ENCODE measurements at regions of chr18 and their contacts with region 1.

Region 1: DNA sequence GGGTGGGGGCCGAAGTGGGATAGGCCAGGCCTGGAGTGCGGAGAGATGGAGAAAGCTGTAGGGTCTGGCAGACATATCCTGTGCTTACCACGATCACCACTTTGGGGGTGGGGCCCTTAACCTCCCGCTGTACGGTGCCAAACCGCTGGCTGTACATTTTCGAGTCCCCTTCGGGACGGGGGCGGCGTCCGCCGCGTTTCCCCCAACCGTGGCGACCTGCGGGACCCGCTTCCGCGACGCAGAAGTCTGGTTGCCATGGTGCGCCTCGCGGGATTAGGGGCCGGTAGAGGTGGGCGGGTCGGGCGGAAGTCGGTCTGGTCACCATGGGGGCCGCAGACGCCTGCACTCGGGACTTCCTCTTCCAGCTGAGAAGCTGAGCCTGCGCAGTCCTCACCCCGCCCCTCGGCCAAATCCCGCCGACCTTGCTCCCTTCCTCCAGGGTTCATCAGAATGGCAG is at the start of gene CFAP53:
- DNase-seq: peak; percentile 91
- ATAC-seq: peak; percentile 80
- H3K4me3 Mint-ChIP-seq: peak within 1 kb of the TSS; percentile 89
- H3K27ac Mint-ChIP-seq: peak within 1 kb of the TSS; percentile 88
- H3K4me1 Mint-ChIP-seq: peaks cover 28% of the 10 kb centered on the region
- H3K27me3 Mint-ChIP-seq: no peaks in the 10 kb centered on the region
- CTCF ChIP-seq: no peak
- total RNA-seq, gene CFAP53: 0.27 and 0.29 TPM in 2 replicates

Region 2: DNA sequence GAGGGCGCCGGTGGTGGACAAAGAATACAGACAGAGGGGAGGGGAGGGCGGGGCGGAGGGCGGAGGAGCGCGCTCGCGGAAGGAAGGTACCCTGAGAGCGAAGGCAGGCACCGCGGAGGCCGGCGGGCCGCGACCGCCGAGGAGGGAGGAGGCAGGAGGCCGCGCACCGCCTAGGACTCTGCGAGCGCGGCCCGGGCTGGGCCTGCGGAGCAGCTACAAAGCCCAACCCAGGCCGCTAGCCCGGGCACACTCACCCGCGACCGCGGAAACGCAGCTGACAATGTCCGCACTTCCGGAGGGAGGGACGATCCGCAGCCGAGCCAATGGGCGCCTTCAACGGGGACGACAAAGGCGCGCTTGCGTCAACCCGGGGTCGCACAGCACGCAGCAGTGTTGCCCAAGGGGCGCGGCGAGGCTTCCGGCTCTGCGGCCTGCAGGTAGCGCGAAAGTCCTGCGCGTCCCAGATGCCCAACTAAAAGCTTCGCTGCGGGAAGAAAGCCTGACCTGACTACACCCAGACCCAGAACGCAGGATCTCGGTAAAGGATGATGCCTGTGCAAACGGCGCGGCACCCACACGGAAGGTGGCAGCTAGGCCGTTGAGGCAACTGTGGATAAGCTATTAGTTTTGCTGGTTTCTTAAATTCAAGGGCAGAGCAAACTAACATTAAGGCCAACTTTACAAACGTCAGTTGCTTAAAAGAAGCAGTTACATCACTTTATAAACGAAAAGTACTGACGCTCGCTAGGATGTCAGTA is 779.1 kb before region 1 on chr18 and contains the start of gene C18orf32:
- CTCF ChIA-PET with region 1: no interaction called
- POLR2A ChIA-PET with region 1: interaction called, 5 read pairs
- intact Hi-C with region 1: loop called (anchors 1 kb)
- DNase-seq: peak; percentile 94
- ATAC-seq: peak; percentile 92
- H3K4me3 Mint-ChIP-seq: peak within 1 kb of the TSS; percentile 94
- H3K27ac Mint-ChIP-seq: peak within 1 kb of the TSS; percentile 98
- H3K4me1 Mint-ChIP-seq: peaks cover 68% of the 10 kb centered on the region
- H3K27me3 Mint-ChIP-seq: no peaks in the 10 kb centered on the region
- CTCF ChIP-seq: no peak
- total RNA-seq, gene C18orf32: 31.6 and 32.9 TPM in 2 replicates

Region 3: GRCh38 chr18:50009773-50010335 is 256.4 kb before region 1 on chr18:
- CTCF ChIA-PET with region 1: no interaction called
- POLR2A ChIA-PET with region 1: no interaction called
- intact Hi-C with region 1: loop called (anchors 2 kb)
- DNase-seq: no peak
- ATAC-seq: peak; percentile 79
- H3K4me3 Mint-ChIP-seq: no peak overlapping the region
- H3K27ac Mint-ChIP-seq: no peak overlapping the region
- H3K4me1 Mint-ChIP-seq: no peaks in the 10 kb centered on the region
- H3K27me3 Mint-ChIP-seq: peaks cover 4% of the 10 kb centered on the region
- CTCF ChIP-seq: no peak

Region 4: DNA sequence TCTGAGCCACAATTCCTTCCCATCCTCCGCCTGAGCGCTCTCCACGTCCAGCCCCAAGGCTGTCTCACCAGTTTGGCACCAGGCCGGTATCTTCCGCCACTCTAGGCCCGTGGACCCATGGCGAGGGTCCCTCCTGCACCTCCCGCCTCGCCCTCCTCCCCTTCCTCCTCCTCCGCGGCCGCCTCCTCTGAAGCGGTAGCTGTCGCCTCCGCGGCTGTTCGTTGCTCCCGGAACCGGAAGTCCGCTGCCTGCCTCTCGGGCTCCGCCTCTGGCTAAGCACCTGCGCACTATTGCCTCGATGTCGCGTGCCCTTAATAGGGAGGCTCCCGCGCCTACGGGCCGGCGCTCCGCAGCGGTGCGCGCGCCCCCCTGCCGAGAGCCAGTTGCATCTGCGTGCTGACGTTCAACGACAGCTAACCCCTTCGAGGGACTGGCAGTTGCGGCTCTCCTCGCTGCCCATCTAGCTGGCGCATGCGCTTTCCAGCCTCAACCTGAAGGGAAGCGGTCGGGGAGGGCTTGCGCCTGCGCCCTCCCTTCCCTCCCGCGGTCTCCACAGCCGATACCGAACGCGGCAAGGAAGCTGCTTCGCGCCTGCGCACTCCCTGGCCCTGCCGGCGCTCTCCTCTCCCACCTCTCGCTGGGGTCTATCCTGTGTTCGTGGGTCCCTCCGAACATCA is 15.2 kb after region 1 on chr18 and contains the start of gene MBD1:
- CTCF ChIA-PET with region 1: interaction called, 14 read pairs
- POLR2A ChIA-PET with region 1: interaction called, 44 read pairs
- intact Hi-C with region 1: loop called (anchors 1 kb)
- DNase-seq: peak; percentile 90
- ATAC-seq: peak; percentile 94
- H3K4me3 Mint-ChIP-seq: peak within 1 kb of the TSS; percentile 97
- H3K27ac Mint-ChIP-seq: peak within 1 kb of the TSS; percentile 93
- H3K4me1 Mint-ChIP-seq: peaks cover 38% of the 10 kb centered on the region
- H3K27me3 Mint-ChIP-seq: no peaks in the 10 kb centered on the region
- CTCF ChIP-seq: no peak
- total RNA-seq, gene MBD1: 101 and 117 TPM in 2 replicates

Region 5: DNA sequence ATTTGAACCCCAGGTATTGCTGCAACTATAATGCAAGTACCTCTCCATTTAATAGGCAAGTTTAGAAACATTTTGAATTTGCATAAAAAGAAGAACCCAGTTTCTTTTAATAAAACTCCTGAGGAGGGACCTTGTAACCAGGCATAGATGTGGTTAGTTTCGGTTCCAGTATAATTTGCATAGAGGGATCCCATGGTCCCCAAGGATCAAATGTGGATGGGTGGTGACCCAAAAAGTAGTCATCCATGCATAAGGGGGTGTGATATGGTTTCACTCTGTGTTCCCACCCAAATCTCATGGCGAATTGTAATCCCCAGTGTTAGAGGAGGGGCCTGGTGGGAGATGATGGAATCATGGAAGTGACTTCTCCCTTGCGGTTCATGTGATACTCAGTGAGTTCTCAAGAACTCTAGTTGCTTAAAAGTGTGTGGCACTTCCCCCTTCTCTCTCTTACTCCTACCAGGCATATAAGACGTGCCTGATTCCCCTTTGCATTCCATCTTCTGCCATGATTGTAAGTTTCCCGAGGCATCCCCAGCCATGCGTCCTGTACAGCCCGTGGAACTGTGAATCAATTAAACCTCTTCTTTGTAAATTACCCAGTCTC is 68.4 kb after region 1 on chr18:
- CTCF ChIA-PET with region 1: interaction called, 3 read pairs
- POLR2A ChIA-PET with region 1: no interaction called
- intact Hi-C with region 1: loop called (anchors 1 kb)
- DNase-seq: no peak
- ATAC-seq: peak; percentile 91
- H3K4me3 Mint-ChIP-seq: peak overlapping the region; percentile 64
- H3K27ac Mint-ChIP-seq: peak overlapping the region; percentile 48
- H3K4me1 Mint-ChIP-seq: peaks cover 77% of the 10 kb centered on the region
- H3K27me3 Mint-ChIP-seq: peaks cover 3% of the 10 kb centered on the region
- CTCF ChIP-seq: no peak

Measured in activated B cell treated with CpG ODN at 0.5 μM for 24 hours (primary cell).